Colonic mucosa (tissue), 4 donors: ENCODE measurements at regions of chr22 and their contacts with region 1.

Region 1: GRCh38 chr22:24391836-24392217 is 35.6 kb upstream of the ADORA2A start:
- DNase-seq: no peak
- H3K4me3 ChIP-seq: no peak overlapping the region
- H3K27ac ChIP-seq: no peak overlapping the region
- H3K4me1 ChIP-seq: no peaks in the 10 kb centered on the region
- H3K27me3 ChIP-seq: no peaks in the 10 kb centered on the region
- CTCF ChIP-seq: no peak

Region 2: DNA sequence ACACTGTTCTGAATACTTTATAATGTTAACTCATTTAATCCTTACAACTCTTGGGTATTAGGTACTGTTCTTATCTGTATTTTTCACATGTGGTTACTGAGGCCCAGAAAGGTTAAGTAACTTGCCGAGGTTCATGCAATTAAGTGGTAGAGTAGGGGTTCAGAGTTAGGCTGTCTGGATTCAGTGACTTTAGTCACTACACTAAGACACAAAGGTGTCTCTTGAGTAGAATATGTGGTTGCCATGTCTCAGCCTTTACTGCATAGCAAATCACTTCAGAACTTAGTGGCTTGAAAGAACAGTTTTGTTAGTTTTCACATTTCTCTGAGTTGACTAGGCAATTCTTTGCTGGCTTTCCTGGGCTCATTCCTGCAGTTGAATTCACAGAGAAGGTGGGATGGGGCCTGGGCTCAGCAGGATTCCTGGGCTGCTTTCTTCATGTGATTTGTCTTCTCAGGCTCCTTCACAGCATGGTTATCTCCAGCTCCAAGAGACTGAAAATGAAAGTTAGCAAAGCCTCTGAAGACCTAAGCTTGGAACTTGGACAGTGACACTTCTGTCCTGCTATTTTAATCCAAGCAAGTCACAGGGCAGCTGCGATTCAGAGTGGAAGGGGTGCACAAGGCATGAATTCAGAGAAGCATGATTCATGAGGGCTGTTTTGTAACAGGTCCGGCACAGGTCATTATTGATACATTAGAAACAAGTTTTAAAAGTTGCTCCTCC is 52.9 kb before region 1 on chr22:
- intact Hi-C with region 1: loop called (anchors 10 kb)
- DNase-seq: no peak
- H3K4me3 ChIP-seq: no peak overlapping the region
- H3K27ac ChIP-seq: no peak overlapping the region
- H3K4me1 ChIP-seq: no peaks in the 10 kb centered on the region
- H3K27me3 ChIP-seq: no peaks in the 10 kb centered on the region
- CTCF ChIP-seq: no peak

Region 3: GRCh38 chr22:24681236-24681635 is 289.4 kb after region 1 on chr22:
- intact Hi-C with region 1: no loop called
- DNase-seq: no peak
- H3K4me3 ChIP-seq: no peak overlapping the region
- H3K27ac ChIP-seq: no peak overlapping the region
- H3K4me1 ChIP-seq: no peaks in the 10 kb centered on the region
- H3K27me3 ChIP-seq: no peaks in the 10 kb centered on the region
- CTCF ChIP-seq: no peak